ENCODE measurements at regions of chr15 and their contacts with region 1.

Region 1: DNA sequence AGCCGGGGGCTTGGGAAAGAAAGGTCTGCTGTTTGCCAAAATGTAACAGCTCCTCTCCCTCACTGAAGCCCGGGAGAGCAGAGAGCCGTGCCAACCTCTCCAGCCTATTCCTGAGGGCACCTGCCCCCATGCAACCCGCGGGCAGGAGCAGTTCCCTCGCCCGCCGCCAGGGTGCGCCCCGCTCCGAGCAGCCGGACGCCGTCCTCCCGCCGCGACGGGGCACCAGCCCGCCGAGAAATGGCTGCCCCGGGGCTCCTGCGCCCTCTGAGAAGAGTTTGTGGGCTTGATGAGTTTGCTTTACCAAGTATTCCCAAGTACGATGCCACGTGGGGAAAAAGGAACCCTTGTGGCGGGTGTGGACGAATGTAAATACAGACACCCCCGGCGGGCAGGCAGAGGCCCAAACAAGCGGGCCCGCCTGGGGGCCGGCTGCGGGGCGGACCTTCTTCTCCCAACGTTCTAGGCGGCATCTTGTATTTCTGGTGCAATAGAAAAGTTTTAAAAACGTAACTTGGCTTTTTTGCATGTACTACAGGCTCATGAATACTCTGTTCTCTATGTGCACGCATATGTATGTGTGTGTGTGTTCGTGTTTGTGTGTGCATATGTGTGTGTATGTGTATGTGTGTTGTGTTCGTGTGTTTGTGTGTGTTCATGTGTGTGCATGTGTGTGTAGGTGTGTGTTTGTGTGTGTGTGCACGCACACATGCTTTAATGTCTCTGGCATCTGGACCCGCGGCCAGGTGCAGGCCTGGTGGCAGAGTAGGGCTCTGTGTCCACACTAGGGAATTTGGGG is 162.9 kb downstream of the CHSY1 start:
- ATAC-seq: peak in 5 of 8 experiments; percentile 23 to 99 (median 81)
- H3K4me3 ChIP-seq: no peak overlapping the region
- H3K27ac ChIP-seq: no peak overlapping the region
- H3K4me1 ChIP-seq: peaks cover 20 to 36% of the 10 kb centered on the region in 2 donors

Region 2: GRCh38 chr15:100891307-100892008 is 197.5 kb before region 1 on chr15:
- in situ Hi-C with region 1: no loop called
- ATAC-seq: peak in 5 of 8 experiments; percentile 63 to 88 (median 79)
- H3K4me3 ChIP-seq: no peak overlapping the region
- H3K27ac ChIP-seq: peak overlapping the region in 1 of 2 donors; percentile 7
- H3K4me1 ChIP-seq: peaks cover 0 to 7% of the 10 kb centered on the region in 2 donors

Region 3: DNA sequence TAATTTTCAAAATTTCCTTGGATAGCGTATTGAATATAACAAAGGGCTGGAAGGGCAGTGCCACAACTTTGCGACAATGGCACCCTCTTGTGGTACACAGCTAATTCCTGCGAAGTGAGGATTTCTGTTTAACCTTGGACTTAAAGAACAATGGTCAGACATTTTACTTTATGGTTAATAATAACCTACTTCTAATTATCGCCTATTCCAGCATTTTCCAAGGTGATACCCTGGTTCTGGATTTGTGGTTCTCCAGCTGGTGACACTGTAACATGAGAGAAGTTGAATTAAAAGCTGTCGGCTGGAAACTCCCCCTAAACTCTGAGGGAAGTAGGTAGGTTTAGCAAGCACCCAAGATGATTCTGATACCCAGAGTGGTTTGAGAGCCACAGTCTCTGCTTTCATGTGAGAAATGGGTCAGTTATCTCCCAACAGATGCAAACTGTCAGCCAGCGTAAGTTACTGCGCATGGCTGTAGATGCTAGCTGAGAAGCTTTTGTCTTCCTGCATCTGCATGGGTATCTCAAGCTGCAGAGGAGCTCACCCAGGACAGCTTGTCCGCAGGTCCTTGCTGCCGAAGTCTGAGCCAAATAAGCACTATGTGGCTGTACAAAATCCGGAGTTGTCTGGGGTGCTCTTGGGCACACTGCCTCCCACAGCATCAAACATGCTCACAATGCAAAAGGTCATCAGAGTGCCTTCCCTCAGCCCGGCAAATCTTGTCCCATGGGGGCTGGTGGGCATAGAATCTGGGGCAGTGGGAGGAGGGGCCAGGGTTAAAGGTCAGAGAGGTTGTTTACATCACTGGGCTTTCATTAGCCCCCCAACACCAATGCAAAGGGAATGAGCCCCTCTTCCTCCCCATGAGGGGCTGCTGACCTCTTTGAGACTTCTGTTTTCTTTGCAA is 169.5 kb after region 1 on chr15:
- in situ Hi-C with region 1: loop called in 3 of 9 experiments (anchors 5 to 10 kb)
- ATAC-seq: peak; percentile 60 to 92 (median 75)
- H3K4me3 ChIP-seq: no peak overlapping the region
- H3K27ac ChIP-seq: no peak overlapping the region
- H3K4me1 ChIP-seq: peaks cover 4 to 8% of the 10 kb centered on the region in 2 donors

Region 4: GRCh38 chr15:101294731-101295606 is 206.0 kb after region 1 on chr15 and contains the start of gene SNRPA1:
- in situ Hi-C with region 1: no loop called
- ATAC-seq: peak; percentile 60 to 95 (median 92)
- H3K4me3 ChIP-seq: peak within 1 kb of the TSS; percentile 74 to 93 (median 79)
- H3K27ac ChIP-seq: peak within 1 kb of the TSS; percentile 87 to 92
- H3K4me1 ChIP-seq: peaks cover 10 to 19% of the 10 kb centered on the region in 2 donors
- total RNA-seq, gene SNRPA1: 30.9 to 101 (median 68.4) TPM

Region 5: DNA sequence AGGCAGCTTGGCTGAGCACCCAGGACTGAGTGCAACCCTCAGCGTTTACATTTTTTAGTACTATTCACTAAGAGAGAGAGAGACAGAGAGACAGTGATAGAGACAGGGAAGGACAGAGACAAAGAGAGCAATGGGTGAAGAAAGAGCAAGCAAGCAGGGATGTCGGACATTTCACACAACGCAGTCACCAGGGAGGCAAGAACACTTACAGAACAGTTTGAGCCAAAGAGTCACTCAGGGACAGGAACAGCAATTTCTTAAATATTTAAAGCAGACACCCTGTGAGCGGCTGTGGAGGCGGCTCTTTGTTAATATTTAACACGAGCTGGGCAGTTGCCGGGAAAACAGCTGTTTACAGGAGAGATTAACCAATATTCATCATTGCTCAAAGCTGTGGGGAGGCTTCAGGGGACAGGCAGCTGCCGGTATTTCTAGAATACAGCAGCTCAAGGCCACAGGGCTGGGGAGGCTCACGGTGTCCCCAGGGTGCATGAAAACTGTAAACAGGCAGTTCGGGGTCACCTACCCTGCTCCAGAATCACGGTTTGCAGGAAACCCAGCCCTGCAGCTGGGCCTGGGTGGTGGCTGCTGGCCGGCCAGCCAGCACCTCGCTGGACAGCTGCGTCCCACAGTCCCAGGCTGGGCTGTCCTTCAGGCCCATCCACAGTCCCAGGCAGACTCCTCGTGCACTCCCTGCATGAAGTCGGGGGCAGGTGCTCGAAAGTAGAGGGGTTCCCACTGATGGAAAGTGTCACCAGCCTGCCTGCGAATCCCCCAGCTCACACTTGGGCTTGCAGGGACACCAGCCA is 439.3 kb after region 1 on chr15:
- in situ Hi-C with region 1: no loop called
- ATAC-seq: peak; percentile 41 to 92 (median 85)
- H3K4me3 ChIP-seq: no peak overlapping the region
- H3K27ac ChIP-seq: peak overlapping the region in 1 of 2 donors; percentile 2
- H3K4me1 ChIP-seq: peaks cover 0 to 14% of the 10 kb centered on the region in 2 donors